Activated CD4-positive, alpha-beta T cell treated with anti-CD3 and anti-CD28 coated beads, Interleukin-2, amount 10 ng/mL, durations not matched to agents 24 days and 14 days (primary cell): ENCODE measurements at regions of chr2 and their contacts with region 1.

Region 1: GRCh38 chr2:88919087-88919738 is 227.7 kb downstream of the RPIA start:
- DNase-seq: no peak
- H3K4me3 Mint-ChIP-seq: no peak overlapping the region
- H3K27ac Mint-ChIP-seq: no peak overlapping the region
- H3K4me1 Mint-ChIP-seq: no peaks in the 10 kb centered on the region
- H3K27me3 Mint-ChIP-seq: peaks cover 16% of the 10 kb centered on the region

Region 2: GRCh38 chr2:88690635-88691338 is 228.4 kb before region 1 on chr2:
- intact Hi-C with region 1: no loop called
- DNase-seq: peak; percentile 86
- H3K4me3 Mint-ChIP-seq: peak overlapping the region; percentile 99
- H3K27ac Mint-ChIP-seq: peak overlapping the region; percentile 97
- H3K4me1 Mint-ChIP-seq: peaks cover 45% of the 10 kb centered on the region
- H3K27me3 Mint-ChIP-seq: no peaks in the 10 kb centered on the region

Region 3: GRCh38 chr2:88739985-88740600 is 179.1 kb before region 1 on chr2:
- intact Hi-C with region 1: no loop called
- DNase-seq: peak; percentile 92
- H3K4me3 Mint-ChIP-seq: no peak overlapping the region
- H3K27ac Mint-ChIP-seq: no peak overlapping the region
- H3K4me1 Mint-ChIP-seq: peaks cover 12% of the 10 kb centered on the region
- H3K27me3 Mint-ChIP-seq: no peaks in the 10 kb centered on the region

Region 4: DNA sequence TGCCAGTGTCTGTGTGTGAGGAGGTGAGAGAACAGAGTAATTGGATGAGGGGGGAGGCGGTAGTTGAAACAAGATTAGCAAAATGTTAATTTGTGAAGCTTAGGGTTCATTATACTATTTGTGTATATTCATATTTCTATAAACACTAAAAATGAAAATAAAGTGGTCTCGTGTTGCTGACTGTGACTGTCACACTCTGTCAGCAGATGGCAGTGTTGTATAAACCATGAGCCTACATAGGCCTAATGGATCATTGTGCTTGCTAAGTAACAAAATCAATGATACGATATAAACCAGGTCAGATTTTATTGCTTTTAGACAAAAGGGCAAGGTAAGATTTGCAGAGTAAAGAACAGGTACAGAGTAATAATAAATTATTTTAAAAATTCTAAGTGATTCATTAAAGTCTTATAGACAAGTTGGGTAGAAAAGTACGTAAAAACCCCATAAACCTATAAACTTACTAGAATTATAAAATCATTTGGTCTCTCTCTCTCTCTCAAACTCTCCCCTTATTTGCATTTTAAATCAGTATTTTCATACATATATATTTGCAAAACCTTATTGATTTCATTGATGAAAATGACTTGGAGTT is 45.1 kb before region 1 on chr2:
- intact Hi-C with region 1: loop called (anchors 2 kb)
- DNase-seq: peak; percentile 86
- H3K4me3 Mint-ChIP-seq: no peak overlapping the region
- H3K27ac Mint-ChIP-seq: no peak overlapping the region
- H3K4me1 Mint-ChIP-seq: no peaks in the 10 kb centered on the region
- H3K27me3 Mint-ChIP-seq: peaks cover 18% of the 10 kb centered on the region

Region 5: DNA sequence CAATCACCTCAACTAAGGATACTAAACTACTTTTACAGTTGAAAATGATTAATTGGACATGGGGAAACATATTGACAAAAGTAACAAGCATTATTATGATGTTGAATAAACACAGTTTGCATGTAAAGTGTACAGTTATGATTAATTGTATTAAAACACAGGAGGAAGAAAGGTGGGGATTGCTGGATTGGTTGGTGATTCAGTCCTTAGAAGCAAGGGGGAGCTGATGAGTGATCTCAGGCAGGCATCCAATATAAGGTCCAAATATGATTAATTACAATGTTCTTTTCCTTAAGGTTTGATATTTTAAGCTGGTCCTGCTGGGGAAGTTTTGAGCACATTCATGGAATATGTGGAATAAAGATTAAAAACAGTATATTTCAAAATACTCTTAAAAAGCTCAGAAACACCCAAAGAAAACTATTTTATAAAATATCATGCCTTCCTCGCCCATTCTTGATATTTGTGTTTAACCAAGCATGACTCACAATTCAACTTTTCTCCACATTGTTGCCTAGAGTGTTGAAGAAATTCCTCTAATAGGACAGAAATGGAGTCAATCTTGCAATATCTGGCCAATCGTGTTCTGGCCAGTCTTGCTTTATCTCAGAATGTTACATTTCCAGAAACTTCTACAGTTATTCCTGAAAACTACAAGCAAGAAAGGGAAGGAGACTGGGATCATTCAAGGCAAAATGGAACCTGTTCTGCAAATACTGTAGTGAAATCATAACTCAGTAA is 40.4 kb after region 1 on chr2:
- intact Hi-C with region 1: no loop called
- DNase-seq: no peak
- H3K4me3 Mint-ChIP-seq: no peak overlapping the region
- H3K27ac Mint-ChIP-seq: no peak overlapping the region
- H3K4me1 Mint-ChIP-seq: no peaks in the 10 kb centered on the region
- H3K27me3 Mint-ChIP-seq: peaks cover 2% of the 10 kb centered on the region

Region 6: GRCh38 chr2:89000235-89000634 is 81.0 kb after region 1 on chr2:
- intact Hi-C with region 1: no loop called
- DNase-seq: no peak
- H3K4me3 Mint-ChIP-seq: no peak overlapping the region
- H3K27ac Mint-ChIP-seq: no peak overlapping the region
- H3K4me1 Mint-ChIP-seq: no peaks in the 10 kb centered on the region
- H3K27me3 Mint-ChIP-seq: no peaks in the 10 kb centered on the region